Activated CD4-positive, alpha-beta memory T cell treated with anti-CD3 and anti-CD28 coated beads, Interleukin-2, amount 10 ng/mL, durations not matched to agents 7 days and 5 days (primary cell): ENCODE measurements at regions of chr10 and their contacts with region 1.

Region 1: DNA sequence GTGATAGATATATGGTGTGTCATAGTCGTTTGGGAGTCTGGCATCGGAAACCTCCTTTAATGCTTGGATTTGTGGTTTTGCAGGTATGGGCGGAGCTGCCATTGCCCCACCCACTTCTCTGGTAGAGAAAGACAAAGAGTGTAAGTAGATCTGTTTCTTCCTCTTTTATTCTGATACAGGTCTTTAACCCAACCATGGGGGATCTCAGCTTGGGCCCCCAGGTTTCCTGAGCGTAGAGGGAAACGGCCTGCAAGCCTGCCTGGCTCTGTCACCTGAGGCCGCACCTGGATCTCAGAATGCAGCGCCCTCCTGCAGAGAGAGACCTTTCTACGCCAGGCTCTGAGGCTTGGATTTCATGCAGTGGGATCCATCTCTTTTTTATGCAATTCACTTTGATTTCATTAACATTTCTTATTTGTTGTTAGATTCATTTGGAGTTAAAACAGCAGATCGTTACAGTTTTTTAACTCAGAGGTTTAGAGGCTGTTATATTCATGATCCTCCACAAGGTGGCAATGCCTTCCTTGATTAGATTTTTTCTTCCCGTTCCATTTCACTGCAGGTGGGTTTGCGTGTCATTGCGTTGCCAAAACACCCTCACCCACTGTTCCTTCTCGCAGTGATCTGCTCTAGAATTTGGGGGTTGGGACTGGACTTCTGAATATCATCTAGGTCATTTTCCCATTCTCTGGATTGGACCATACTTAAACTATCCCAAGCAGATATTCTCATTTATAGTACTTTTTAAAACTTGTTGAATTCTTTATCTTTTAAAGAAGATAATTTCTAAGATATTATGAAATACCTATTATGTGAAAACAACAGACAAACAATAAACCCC is 20.0 kb downstream of the RBM17 start:
- DNase-seq: peak; percentile 39
- H3K4me3 Mint-ChIP-seq: no peak overlapping the region
- H3K27ac Mint-ChIP-seq: peak overlapping the region; percentile 70
- H3K4me1 Mint-ChIP-seq: peaks cover 53% of the 10 kb centered on the region
- H3K27me3 Mint-ChIP-seq: no peaks in the 10 kb centered on the region

Region 2: GRCh38 chr10:5948999-5949759 is 159.6 kb before region 1 on chr10:
- CTCF ChIA-PET with region 1: no interaction called
- POLR2A ChIA-PET with region 1: no interaction called
- DNase-seq: peak; percentile 33
- H3K4me3 Mint-ChIP-seq: no peak overlapping the region
- H3K27ac Mint-ChIP-seq: no peak overlapping the region
- H3K4me1 Mint-ChIP-seq: peaks cover 7% of the 10 kb centered on the region
- H3K27me3 Mint-ChIP-seq: no peaks in the 10 kb centered on the region

Region 3: DNA sequence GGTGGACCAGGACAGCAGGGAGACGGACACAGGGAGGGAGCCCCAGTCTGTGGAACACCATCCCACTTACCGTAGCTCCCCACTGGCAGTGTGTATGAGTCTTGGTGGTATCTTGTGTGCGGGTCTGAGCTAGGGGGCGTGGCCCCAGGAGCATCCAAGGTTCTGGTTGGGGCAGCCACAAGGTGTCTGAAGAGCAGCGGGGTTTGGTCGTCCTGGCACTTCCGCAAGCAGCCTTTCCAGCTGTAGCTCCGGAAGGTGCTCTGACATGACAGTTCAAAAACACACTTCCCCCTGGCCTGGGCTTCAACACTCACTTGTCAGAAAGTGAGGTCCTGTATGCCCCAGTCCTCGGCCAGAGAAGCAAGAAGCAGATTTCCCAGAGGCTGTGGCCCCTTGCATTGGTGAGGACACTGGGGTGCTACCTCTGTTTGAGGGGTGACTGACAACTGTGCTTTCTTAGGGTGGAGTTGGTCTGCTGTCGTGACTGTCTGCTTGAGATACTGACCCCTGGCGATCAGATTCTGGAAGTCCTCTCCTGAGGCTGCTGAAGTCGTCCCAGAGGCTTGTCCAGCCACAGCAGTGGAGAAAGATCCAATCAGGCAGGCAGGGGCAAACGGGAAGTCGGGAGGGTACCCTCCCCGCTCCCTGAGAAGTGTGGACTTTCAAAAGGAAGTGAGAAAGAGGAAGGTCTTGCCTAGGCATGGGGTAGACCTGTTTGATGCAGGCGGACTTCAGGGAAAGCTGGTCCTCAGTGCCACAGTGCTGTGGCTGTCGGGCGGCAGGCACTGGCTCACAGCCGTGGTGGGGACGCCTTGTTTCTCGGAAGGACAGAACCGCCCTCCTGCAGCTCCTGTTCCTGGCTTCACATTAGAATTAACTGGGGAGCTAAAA is 42.5 kb after region 1 on chr10:
- CTCF ChIA-PET with region 1: interaction called, 17 read pairs
- POLR2A ChIA-PET with region 1: no interaction called
- DNase-seq: peak; percentile 54
- H3K4me3 Mint-ChIP-seq: peak overlapping the region; percentile 19
- H3K27ac Mint-ChIP-seq: peak overlapping the region; percentile 51
- H3K4me1 Mint-ChIP-seq: peaks cover 47% of the 10 kb centered on the region
- H3K27me3 Mint-ChIP-seq: no peaks in the 10 kb centered on the region

Region 4: DNA sequence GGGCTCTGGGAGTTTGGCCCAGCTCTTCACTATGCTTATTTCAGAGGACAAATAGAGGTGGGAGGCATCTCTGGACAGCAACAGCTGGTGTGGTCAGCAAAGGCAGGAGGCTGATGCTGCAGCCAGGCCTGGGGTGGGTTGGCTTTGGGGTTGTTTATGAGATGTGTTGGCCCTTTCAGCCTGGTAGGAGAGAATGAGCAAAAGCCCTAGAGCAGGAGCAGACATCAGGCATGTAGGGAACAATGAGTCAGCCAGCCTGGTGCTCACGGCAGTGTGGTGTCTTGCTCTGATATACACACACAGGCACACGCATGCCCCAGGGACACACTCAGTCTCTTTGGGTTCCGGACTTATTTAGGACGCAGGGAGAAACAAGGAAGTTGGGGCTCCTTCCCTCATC is 314.2 kb after region 1 on chr10:
- CTCF ChIA-PET with region 1: no interaction called
- POLR2A ChIA-PET with region 1: no interaction called
- DNase-seq: no peak
- H3K4me3 Mint-ChIP-seq: no peak overlapping the region
- H3K27ac Mint-ChIP-seq: no peak overlapping the region
- H3K4me1 Mint-ChIP-seq: peaks cover 7% of the 10 kb centered on the region
- H3K27me3 Mint-ChIP-seq: no peaks in the 10 kb centered on the region